ENCODE measurements at regions of chr19 and their contacts with region 1.

Region 1: DNA sequence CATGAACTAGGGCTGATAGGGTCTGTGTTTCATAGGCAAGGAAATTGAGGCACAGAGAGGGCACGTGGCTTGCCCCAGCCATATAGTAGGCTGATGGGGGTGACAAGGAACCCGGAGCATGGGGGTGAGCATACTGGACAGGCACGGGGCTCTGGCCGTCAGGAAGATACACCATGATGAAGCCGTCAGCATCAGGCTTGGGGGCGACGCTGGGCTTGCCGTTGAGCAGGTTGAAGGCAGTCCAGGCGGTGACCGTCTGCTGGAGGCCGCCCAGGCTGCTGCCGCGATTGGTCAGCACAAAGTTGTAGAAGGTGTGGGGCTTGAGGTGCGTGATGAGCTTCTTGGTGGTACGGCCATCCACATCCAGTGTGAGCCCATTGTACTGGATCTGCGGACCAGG is 119.7 kb downstream of the PTPRS start:
- DNase-seq: no peak
- ATAC-seq: no peak
- H3K4me3 ChIP-seq: no peak overlapping the region
- H3K4me3 Mint-ChIP-seq: no peak overlapping the region
- H3K27ac ChIP-seq: no peak overlapping the region
- H3K27ac Mint-ChIP-seq: no peak overlapping the region
- H3K4me1 ChIP-seq: peaks cover 0 to 8% of the 10 kb centered on the region in 2 experiments
- H3K4me1 Mint-ChIP-seq: peaks cover 0 to 3% (median 0%) of the 10 kb centered on the region in 3 donors
- H3K27me3 ChIP-seq: peaks cover 0 to 20% of the 10 kb centered on the region in 2 experiments
- H3K27me3 Mint-ChIP-seq: peaks cover 4 to 6% of the 10 kb centered on the region in 2 donors

Region 2: DNA sequence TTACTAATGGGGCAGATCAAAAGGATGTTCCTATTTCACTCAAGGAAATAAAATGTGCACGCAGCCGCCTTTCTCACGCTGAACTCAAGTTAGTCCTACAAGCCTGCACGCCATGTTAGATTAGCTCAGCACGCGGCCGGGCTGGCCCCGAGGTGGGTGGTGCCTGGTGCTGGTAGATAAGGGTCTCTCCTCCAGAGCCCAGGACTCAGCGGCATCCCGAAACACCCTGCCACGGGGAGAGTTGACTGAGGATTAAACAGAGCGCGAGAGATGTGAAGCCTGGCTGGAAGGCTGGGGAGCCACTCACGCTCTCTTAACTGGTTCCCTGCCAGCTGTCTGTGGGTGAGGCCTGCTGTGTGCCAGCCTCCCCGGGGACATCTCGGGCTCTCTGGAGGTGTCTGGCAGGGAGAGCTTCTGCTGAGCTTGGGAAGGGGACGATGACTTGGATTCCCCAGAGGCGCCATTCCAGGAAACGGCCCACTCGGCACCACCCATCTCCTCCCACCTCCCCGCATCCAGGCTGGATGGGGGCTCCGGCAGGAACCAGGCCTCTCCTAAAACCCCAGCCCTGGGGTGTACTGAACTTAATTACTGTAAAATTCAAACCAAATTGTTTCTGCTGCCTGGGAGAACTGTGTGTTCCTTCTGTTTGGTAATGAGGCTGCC is 129.7 kb before region 1 on chr19:
- CTCF ChIA-PET with region 1: no interaction called
- POLR2A ChIA-PET with region 1: no interaction called
- DNase-seq: no peak
- ATAC-seq: no peak
- H3K4me3 ChIP-seq: no peak overlapping the region
- H3K4me3 Mint-ChIP-seq: no peak overlapping the region
- H3K27ac ChIP-seq: no peak overlapping the region
- H3K27ac Mint-ChIP-seq: no peak overlapping the region
- H3K4me1 ChIP-seq: no peaks in the 10 kb centered on the region
- H3K4me1 Mint-ChIP-seq: no peaks in the 10 kb centered on the region
- H3K27me3 ChIP-seq: no peaks in the 10 kb centered on the region
- H3K27me3 Mint-ChIP-seq: no peaks in the 10 kb centered on the region

Region 3: DNA sequence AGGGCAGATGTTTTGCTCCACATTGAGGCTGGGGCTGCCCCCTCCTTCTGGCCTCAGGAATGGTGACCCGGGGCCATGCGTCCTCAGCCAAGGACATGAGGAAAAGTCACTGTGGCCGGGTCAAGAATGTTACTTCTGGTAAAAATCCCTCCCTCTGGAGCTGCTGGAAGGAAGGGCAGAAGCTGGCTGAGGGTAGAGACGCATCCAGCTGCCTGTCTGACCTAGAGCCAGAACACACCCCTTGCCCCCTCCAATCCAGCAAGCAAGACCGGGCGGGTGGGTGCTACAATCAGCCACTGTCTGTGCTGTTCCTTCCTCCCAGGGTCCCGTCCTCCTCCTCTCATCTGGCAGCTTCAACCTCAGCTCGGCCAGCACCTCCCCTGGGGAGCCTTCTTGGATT is 60.7 kb after region 1 on chr19:
- CTCF ChIA-PET with region 1: no interaction called
- POLR2A ChIA-PET with region 1: interaction called in 1 of 2 experiments, 15 read pairs
- DNase-seq: no peak
- ATAC-seq: no peak
- H3K4me3 ChIP-seq: no peak overlapping the region
- H3K4me3 Mint-ChIP-seq: no peak overlapping the region
- H3K27ac ChIP-seq: no peak overlapping the region
- H3K27ac Mint-ChIP-seq: no peak overlapping the region
- H3K4me1 ChIP-seq: no peaks in the 10 kb centered on the region
- H3K4me1 Mint-ChIP-seq: no peaks in the 10 kb centered on the region
- H3K27me3 ChIP-seq: peaks cover 0 to 22% of the 10 kb centered on the region in 2 experiments
- H3K27me3 Mint-ChIP-seq: peaks cover 0 to 12% of the 10 kb centered on the region in 2 donors